Left ventricle myocardium superior (tissue), 1 donor: ENCODE measurements at regions of chr17 and their contacts with region 1.

Region 1: GRCh38 chr17:43483674-43484372 is at the start of gene DHX8:
- DNase-seq: peak; percentile 99
- ATAC-seq: peak; percentile 99
- total RNA-seq, gene DHX8: 29.7 TPM

Region 2: GRCh38 chr17:43393944-43394482 is 89.8 kb before region 1 on chr17:
- intact Hi-C with region 1: loop called (anchors 5 kb)
- DNase-seq: peak; percentile 83
- ATAC-seq: peak; percentile 54